Natural killer cell (primary cell): ENCODE measurements at regions of chr22 and their contacts with region 1.

Region 1: GRCh38 chr22:32796865-32797573 is 4.5 kb upstream of the TIMP3 start:
- DNase-seq: peak; percentile 45 to 74
- ATAC-seq: peak; percentile 80 to 93 (median 93)
- H3K4me3 ChIP-seq: no peak overlapping the region
- H3K4me3 Mint-ChIP-seq: no peak overlapping the region
- H3K27ac ChIP-seq: no peak overlapping the region
- H3K27ac Mint-ChIP-seq: peak overlapping the region in 1 of 2 donors; percentile 33
- H3K4me1 ChIP-seq: peaks cover 5% of the 10 kb centered on the region
- H3K4me1 Mint-ChIP-seq: peaks cover 0 to 21% of the 10 kb centered on the region in 2 donors
- H3K27me3 ChIP-seq: peaks cover 7% of the 10 kb centered on the region
- H3K27me3 Mint-ChIP-seq: peaks cover 22 to 42% of the 10 kb centered on the region in 2 donors
- CTCF ChIP-seq: peak; percentile 84

Region 2: GRCh38 chr22:32528984-32529982 is 267.7 kb before region 1 on chr22:
- intact Hi-C with region 1: loop called (anchors 1 kb)
- DNase-seq: peak; percentile 35 to 80
- ATAC-seq: peak; percentile 49 to 81 (median 57)
- H3K4me3 ChIP-seq: no peak overlapping the region
- H3K4me3 Mint-ChIP-seq: no peak overlapping the region
- H3K27ac ChIP-seq: no peak overlapping the region
- H3K27ac Mint-ChIP-seq: no peak overlapping the region
- H3K4me1 ChIP-seq: no peaks in the 10 kb centered on the region
- H3K4me1 Mint-ChIP-seq: no peaks in the 10 kb centered on the region
- H3K27me3 ChIP-seq: no peaks in the 10 kb centered on the region
- H3K27me3 Mint-ChIP-seq: peaks cover 0 to 7% of the 10 kb centered on the region in 2 donors
- CTCF ChIP-seq: peak; percentile 63

Region 3: DNA sequence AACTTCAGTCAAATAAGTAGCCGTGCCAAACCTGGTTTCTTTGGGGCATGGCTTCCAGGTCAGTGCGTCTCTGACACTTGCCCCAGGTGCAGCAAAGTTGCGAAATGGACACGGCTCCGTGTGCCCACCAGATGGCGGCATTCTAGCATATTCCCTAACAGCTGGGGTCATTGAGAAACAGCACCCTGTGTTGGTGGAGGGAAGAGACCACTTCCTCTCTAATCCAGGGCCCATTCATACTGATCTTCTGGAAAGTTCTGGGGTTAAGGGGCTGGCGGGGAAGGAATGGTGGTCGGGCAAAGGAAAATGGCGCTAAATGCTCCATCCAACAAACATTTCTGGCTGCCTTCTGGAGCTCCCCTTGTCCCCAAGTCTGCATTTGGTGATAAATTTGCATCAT is 136.7 kb before region 1 on chr22:
- intact Hi-C with region 1: loop called (anchors 1 kb)
- DNase-seq: peak; percentile 42 to 73
- ATAC-seq: peak in 2 of 3 donors; percentile 58 to 65
- H3K4me3 ChIP-seq: no peak overlapping the region
- H3K4me3 Mint-ChIP-seq: no peak overlapping the region
- H3K27ac ChIP-seq: no peak overlapping the region
- H3K27ac Mint-ChIP-seq: no peak overlapping the region
- H3K4me1 ChIP-seq: no peaks in the 10 kb centered on the region
- H3K4me1 Mint-ChIP-seq: no peaks in the 10 kb centered on the region
- H3K27me3 ChIP-seq: no peaks in the 10 kb centered on the region
- H3K27me3 Mint-ChIP-seq: peaks cover 16 to 25% of the 10 kb centered on the region in 2 donors
- CTCF ChIP-seq: peak; percentile 68

Region 4: DNA sequence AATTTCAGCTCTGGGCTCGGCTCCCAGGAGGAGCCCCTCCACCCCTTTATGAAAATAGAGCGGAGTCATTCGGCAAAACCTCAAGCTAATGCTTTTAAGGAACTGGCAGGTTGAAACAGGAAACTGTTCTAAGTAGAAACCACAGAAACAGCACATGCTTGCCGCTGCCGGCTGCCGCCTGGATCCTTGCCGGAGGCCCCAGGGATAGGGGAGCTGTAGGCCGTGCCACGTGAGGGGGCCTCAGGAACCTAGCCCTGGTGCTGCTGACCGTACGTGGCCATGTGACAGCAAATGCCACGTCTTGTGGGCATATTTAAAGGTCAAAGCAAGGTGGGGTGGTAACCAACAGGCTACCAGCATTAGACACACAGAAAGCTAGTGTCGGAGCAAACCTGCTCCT is 73.4 kb before region 1 on chr22:
- intact Hi-C with region 1: no loop called
- DNase-seq: peak in 1 of 2 donors; percentile 47
- ATAC-seq: peak; percentile 76 to 89 (median 78)
- H3K4me3 ChIP-seq: no peak overlapping the region
- H3K4me3 Mint-ChIP-seq: peak overlapping the region; percentile 75
- H3K27ac ChIP-seq: no peak overlapping the region
- H3K27ac Mint-ChIP-seq: peak overlapping the region; percentile 39 to 55
- H3K4me1 ChIP-seq: peaks cover 18% of the 10 kb centered on the region
- H3K4me1 Mint-ChIP-seq: peaks cover 35 to 37% of the 10 kb centered on the region in 2 donors
- H3K27me3 ChIP-seq: no peaks in the 10 kb centered on the region
- H3K27me3 Mint-ChIP-seq: peaks cover 7 to 17% of the 10 kb centered on the region in 2 donors
- CTCF ChIP-seq: no peak

Region 5: DNA sequence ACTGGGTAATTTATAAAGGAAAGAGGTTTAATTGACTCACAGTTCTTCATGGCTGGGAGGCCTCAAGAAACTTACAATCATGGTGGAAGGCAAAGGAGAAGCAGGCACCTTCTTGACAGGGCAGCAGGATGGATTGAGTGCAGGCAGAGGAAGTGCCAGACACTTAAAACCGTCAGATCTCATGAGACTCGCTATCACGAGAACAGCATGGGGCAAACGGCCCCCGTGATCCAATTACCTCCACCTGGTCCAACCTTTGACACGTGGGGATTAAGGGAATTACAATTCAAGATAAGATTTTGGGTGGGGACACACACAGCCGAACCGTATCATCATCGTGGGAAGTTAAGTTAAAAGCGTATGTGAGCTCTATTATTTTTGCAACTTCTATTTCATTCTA is 332.6 kb after region 1 on chr22:
- intact Hi-C with region 1: no loop called
- DNase-seq: no peak
- ATAC-seq: no peak
- H3K4me3 ChIP-seq: no peak overlapping the region
- H3K4me3 Mint-ChIP-seq: no peak overlapping the region
- H3K27ac ChIP-seq: no peak overlapping the region
- H3K27ac Mint-ChIP-seq: no peak overlapping the region
- H3K4me1 ChIP-seq: no peaks in the 10 kb centered on the region
- H3K4me1 Mint-ChIP-seq: no peaks in the 10 kb centered on the region
- H3K27me3 ChIP-seq: no peaks in the 10 kb centered on the region
- H3K27me3 Mint-ChIP-seq: peaks cover 0 to 7% of the 10 kb centered on the region in 2 donors
- CTCF ChIP-seq: no peak